ENCODE measurements at regions of chr16 and their contacts with region 1.

Region 1: DNA sequence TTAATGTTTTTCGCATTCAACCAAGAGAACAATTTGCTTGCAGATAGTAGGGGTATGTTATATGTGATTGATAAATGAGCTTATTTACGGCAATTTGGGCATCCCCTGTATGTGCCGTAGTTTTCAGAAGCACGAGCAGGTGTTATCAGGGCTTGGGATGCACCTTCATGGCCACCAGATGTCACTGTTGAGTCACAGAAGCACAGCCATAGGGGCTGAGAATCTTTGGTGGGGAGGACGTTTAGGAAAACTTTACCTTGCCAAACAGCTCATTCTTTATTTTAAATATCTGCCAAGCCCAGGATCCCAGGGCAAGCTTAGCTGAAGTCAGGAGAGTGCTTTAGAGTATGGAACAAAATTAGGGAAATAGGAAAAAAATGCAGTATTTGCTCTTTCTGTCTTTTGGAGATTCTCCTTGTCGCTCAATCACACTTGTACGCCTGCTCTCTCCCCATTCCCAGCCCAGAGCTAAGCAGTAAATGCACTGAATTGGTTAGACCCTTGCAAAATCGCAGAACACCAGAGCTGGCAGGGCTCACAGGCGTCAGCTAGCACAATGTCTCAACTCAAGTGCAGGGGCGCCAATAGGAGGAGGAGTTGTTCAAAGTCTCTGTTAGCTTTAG is 93.6 kb upstream of the MPHOSPH6 start:
- DNase-seq: peak; percentile 32 to 42 (median 38)
- H3K4me3 ChIP-seq: no peak overlapping the region
- H3K4me3 Mint-ChIP-seq: no peak overlapping the region
- H3K27ac ChIP-seq: no peak overlapping the region
- H3K27ac Mint-ChIP-seq: no peak overlapping the region
- H3K4me1 ChIP-seq: no peaks in the 10 kb centered on the region
- H3K4me1 Mint-ChIP-seq: peaks cover 0 to 4% (median 0%) of the 10 kb centered on the region in 4 donors
- H3K27me3 ChIP-seq: no peaks in the 10 kb centered on the region
- H3K27me3 Mint-ChIP-seq: peaks cover 4 to 11% of the 10 kb centered on the region in 2 donors

Region 2: GRCh38 chr16:82248677-82249076 is 15.0 kb before region 1 on chr16:
- CTCF ChIA-PET with region 1: interaction called, 19 read pairs
- POLR2A ChIA-PET with region 1: no interaction called
- intact Hi-C with region 1: no loop called
- DNase-seq: no peak
- H3K4me3 ChIP-seq: no peak overlapping the region
- H3K4me3 Mint-ChIP-seq: no peak overlapping the region
- H3K27ac ChIP-seq: no peak overlapping the region
- H3K27ac Mint-ChIP-seq: no peak overlapping the region
- H3K4me1 ChIP-seq: no peaks in the 10 kb centered on the region
- H3K4me1 Mint-ChIP-seq: no peaks in the 10 kb centered on the region
- H3K27me3 ChIP-seq: no peaks in the 10 kb centered on the region
- H3K27me3 Mint-ChIP-seq: peaks cover 0 to 6% of the 10 kb centered on the region in 2 donors

Region 3: DNA sequence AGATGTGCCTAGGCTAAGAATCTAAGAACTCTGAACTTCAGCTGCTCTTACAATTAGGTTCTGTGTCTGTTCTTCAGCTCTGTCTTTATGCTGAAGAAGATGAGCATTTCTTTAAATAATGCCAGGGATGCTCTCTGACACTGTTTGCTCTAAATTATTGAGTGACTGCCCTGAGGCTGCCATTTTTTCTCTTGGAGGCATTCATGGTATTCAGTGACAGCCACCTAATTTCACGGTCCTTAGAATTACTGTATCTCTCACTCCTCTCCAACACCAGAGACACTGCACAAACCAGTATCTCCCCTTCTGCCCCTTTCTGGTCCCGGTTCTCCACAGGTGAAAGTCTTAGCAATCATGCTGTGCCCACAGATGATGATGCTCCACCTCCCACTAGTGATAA is 30.0 kb after region 1 on chr16:
- CTCF ChIA-PET with region 1: interaction called, 16 read pairs
- POLR2A ChIA-PET with region 1: no interaction called
- intact Hi-C with region 1: no loop called
- DNase-seq: no peak
- H3K4me3 ChIP-seq: no peak overlapping the region
- H3K4me3 Mint-ChIP-seq: no peak overlapping the region
- H3K27ac ChIP-seq: no peak overlapping the region
- H3K27ac Mint-ChIP-seq: no peak overlapping the region
- H3K4me1 ChIP-seq: no peaks in the 10 kb centered on the region
- H3K4me1 Mint-ChIP-seq: no peaks in the 10 kb centered on the region
- H3K27me3 ChIP-seq: no peaks in the 10 kb centered on the region
- H3K27me3 Mint-ChIP-seq: peaks cover 0 to 3% of the 10 kb centered on the region in 2 donors

Region 4: DNA sequence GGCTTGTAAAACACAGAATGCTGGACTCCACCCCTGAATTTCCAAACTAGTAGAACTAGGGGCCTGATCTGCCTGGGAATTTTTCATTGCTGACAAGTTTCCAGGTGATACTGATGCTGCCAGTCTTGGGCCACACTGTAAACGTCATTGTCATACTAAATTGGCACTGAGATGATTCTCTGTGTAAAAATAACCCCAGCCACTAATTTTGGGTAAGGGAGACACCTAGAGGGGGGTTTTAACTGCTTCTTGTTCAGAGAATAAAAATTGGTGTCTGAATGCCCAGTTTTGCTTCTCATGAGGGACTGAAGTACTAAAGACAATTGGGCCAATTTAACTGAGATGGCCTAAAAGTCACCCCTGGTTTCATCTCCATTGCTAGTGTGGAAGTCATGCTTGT is 358.2 kb after region 1 on chr16:
- CTCF ChIA-PET with region 1: no interaction called
- POLR2A ChIA-PET with region 1: no interaction called
- intact Hi-C with region 1: loop called (anchors 5 kb)
- DNase-seq: no peak
- H3K4me3 ChIP-seq: no peak overlapping the region
- H3K4me3 Mint-ChIP-seq: no peak overlapping the region
- H3K27ac ChIP-seq: no peak overlapping the region
- H3K27ac Mint-ChIP-seq: no peak overlapping the region
- H3K4me1 ChIP-seq: no peaks in the 10 kb centered on the region
- H3K4me1 Mint-ChIP-seq: peaks cover 0 to 7% (median 0%) of the 10 kb centered on the region in 4 donors
- H3K27me3 ChIP-seq: peaks cover 19% of the 10 kb centered on the region
- H3K27me3 Mint-ChIP-seq: peaks cover 16 to 25% of the 10 kb centered on the region in 2 donors

Region 5: GRCh38 chr16:83447560-83447959 is 1183.9 kb after region 1 on chr16:
- CTCF ChIA-PET with region 1: interaction called, 36 read pairs
- POLR2A ChIA-PET with region 1: no interaction called
- intact Hi-C with region 1: no loop called
- DNase-seq: no peak
- H3K4me3 ChIP-seq: no peak overlapping the region
- H3K4me3 Mint-ChIP-seq: no peak overlapping the region
- H3K27ac ChIP-seq: no peak overlapping the region
- H3K27ac Mint-ChIP-seq: no peak overlapping the region
- H3K4me1 ChIP-seq: no peaks in the 10 kb centered on the region
- H3K4me1 Mint-ChIP-seq: no peaks in the 10 kb centered on the region
- H3K27me3 ChIP-seq: no peaks in the 10 kb centered on the region
- H3K27me3 Mint-ChIP-seq: peaks cover 0 to 2% of the 10 kb centered on the region in 2 donors